ENCODE measurements at regions of chr9 and their contacts with region 1.

Region 1: GRCh38 chr9:89522261-89522958 is 24.5 kb upstream of the SEMA4D start:
- DNase-seq: peak; percentile 89
- H3K4me3 Mint-ChIP-seq: peak overlapping the region; percentile 43
- H3K27ac Mint-ChIP-seq: peak overlapping the region; percentile 93
- H3K4me1 Mint-ChIP-seq: peaks cover 96% of the 10 kb centered on the region
- H3K27me3 Mint-ChIP-seq: no peaks in the 10 kb centered on the region

Region 2: GRCh38 chr9:89505911-89506310 is 16.5 kb before region 1 on chr9:
- CTCF ChIA-PET with region 1: interaction called, 38 read pairs
- POLR2A ChIA-PET with region 1: interaction called, 3 read pairs
- DNase-seq: no peak
- H3K4me3 Mint-ChIP-seq: no peak overlapping the region
- H3K27ac Mint-ChIP-seq: no peak overlapping the region
- H3K4me1 Mint-ChIP-seq: peaks cover 84% of the 10 kb centered on the region
- H3K27me3 Mint-ChIP-seq: no peaks in the 10 kb centered on the region

Region 3: GRCh38 chr9:89536145-89536574 is 13.8 kb after region 1 on chr9:
- CTCF ChIA-PET with region 1: interaction called, 23 read pairs
- POLR2A ChIA-PET with region 1: interaction called, 3 read pairs
- DNase-seq: peak; percentile 57
- H3K4me3 Mint-ChIP-seq: peak overlapping the region; percentile 41
- H3K27ac Mint-ChIP-seq: peak overlapping the region; percentile 93
- H3K4me1 Mint-ChIP-seq: peaks cover 89% of the 10 kb centered on the region
- H3K27me3 Mint-ChIP-seq: no peaks in the 10 kb centered on the region

Region 4: GRCh38 chr9:89576404-89576839 is 54.0 kb after region 1 on chr9:
- CTCF ChIA-PET with region 1: no interaction called
- POLR2A ChIA-PET with region 1: no interaction called
- DNase-seq: peak; percentile 38
- H3K4me3 Mint-ChIP-seq: no peak overlapping the region
- H3K27ac Mint-ChIP-seq: no peak overlapping the region
- H3K4me1 Mint-ChIP-seq: peaks cover 26% of the 10 kb centered on the region
- H3K27me3 Mint-ChIP-seq: peaks cover 60% of the 10 kb centered on the region

Measured in activated CD4-positive, alpha-beta T cell treated with anti-CD3 and anti-CD28 coated beads, Interleukin-2, amount 10 ng/mL, durations not matched to agents 7 days and 5 days (primary cell).